GM13976 (cell line): ENCODE measurements at regions of chr4 and their contacts with region 1.

Region 1: GRCh38 chr4:109803924-109804571 is 2.2 kb upstream of the CFI start:
- DNase-seq: peak; percentile 41
- CTCF ChIP-seq: peak; percentile 48

Region 2: DNA sequence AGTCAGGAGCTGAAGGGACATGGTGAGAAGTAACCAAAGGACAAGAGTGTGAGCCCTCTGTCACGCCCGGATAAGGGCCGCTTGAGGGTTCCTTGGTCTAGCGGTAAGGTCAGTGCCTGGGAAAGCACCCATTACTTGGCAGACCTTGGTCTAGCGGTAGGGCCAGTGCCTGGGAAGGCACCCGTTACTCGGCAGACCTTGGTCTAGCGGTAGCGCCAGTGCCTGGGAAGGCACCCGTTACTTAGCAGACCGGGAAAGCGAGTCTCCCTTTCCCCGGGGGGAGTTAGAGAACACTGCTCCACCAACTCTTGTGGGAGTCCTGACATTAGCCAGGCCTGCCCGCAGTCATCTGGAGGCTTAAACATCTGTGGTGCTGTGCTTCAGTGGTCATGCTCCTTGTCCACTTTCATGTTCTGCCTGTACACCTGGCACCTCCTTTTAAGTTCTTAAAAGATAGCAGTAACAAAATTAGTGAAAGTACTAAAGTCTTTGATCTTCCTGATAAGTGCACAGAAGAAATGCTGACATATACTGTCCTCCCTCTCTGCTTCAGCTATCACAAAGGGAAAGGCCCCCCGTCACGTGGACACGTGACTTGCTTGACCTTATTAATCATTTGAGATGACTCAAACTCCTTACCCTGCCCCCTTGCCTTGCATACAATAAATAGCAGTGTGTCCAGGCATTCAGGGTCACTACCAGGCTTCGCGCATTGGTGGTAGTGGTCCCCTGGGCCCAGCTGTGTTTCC is 379.8 kb before region 1 on chr4:
- in situ Hi-C with region 1: loop called (anchors 10 kb)
- DNase-seq: no peak
- CTCF ChIP-seq: no peak